HEK293T (cell line): ENCODE measurements at regions of chr20 and their contacts with region 1.

Region 1: DNA sequence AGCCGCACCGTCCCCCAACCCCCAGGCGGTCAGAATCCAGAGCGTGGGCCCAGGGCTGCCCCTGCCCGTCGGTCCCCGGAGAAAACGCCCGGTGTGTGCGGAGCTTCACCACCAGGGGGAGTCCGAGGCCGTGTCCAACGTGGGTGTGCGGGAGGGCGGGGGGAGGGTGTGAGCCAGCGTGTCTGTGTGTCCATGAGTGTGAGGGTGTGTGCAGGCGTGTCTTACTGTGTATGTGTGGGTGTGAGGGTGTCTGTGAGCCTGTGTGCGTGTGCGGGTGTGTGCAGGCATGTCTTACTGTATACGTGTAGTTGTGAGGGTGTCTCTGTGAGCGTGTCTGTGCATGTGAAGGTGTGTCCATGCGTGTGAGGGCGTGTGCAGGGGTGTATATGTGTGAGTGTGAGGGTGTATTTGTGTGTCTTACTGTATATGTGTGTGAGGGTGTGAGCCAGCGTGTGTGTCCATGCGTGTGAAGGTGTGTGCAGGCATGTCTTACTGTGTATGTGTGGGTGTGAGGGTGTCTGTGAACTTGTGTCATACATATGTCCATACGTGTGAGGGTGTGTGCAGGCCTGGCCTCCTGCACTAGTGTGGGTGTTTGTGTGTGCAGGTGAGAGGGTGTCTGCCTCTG is 24.6 kb upstream of the GATA5 start:
- DNase-seq: peak; percentile 84

Region 2: GRCh38 chr20:62616728-62617621 is 116.6 kb after region 1 on chr20:
- CTCF ChIA-PET with region 1: interaction called, 19 read pairs
- POLR2A ChIA-PET with region 1: no interaction called
- DNase-seq: peak; percentile 81